PC-3 (cell line): ENCODE measurements at regions of chr18 and their contacts with region 1.

Region 1: DNA sequence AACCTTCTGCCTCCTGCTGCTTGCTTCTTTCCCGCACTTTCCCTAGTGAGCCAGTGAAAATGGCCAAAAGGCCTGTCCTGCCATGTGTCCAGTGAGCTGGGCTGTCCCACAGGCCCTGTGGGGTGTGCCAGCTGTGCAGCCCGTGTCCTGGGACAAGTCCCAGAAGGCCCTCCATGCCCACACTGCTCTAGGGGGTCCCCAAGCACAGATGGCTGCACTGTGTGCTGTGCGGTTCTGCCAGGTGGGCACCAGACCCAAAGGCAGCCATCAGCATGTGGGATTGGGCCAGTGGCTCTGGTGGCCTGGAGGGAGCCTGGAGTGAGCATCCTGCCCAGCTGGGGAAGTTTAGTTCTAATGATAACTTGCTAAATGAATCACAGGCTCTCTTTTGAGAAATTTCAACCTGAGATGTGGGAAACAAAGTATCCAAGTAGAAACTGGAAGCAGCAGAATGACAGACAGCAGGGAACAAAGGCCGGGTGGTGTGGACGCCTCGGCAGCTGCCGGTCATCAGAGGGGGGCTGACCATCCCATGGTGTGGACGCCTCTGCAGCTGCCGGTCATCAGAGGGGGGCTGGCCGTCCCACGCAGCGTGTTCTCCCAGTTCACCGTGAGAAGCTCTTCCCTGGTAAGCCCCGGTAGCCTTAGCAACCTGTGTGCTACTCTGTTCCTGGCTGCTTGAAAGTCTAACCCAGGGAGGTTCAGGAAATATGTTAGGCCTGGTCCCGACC is 9.9 kb upstream of the CNDP2 start:
- DNase-seq: no peak
- ATAC-seq: no peak
- H3K4me3 ChIP-seq: no peak overlapping the region
- H3K27ac ChIP-seq: no peak overlapping the region
- H3K4me1 ChIP-seq: no peaks in the 10 kb centered on the region
- H3K27me3 ChIP-seq: peaks cover 15% of the 10 kb centered on the region
- CTCF ChIP-seq: no peak

Region 2: DNA sequence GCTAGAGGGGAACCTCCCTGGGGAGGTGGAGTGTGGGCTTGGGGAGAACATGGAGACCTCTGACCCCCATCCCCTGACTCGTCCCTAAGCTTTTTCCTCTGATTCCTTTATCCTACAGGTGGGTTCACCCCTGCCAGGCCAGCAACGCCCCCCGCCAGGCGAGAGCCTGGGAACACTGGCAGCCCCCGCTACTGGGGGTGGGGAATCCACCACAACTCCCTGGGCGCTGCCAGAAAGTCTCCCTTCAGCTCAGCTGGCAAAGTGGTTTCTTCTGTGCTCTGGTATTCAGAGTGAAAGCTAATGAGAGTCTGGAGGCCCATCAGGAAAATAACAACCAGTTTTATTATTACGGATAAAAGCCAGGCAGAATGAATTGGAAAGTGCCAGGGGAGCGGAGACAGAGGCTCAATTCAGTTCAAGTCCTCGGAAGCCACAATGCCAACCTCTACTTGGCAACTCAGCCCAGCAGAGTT is 32.0 kb before region 1 on chr18:
- CTCF ChIA-PET with region 1: no interaction called
- POLR2A ChIA-PET with region 1: no interaction called
- intact Hi-C with region 1: loop called (anchors 2 kb)
- DNase-seq: no peak
- ATAC-seq: no peak
- H3K4me3 ChIP-seq: no peak overlapping the region
- H3K27ac ChIP-seq: no peak overlapping the region
- H3K4me1 ChIP-seq: no peaks in the 10 kb centered on the region
- H3K27me3 ChIP-seq: peaks cover 93% of the 10 kb centered on the region
- CTCF ChIP-seq: no peak

Region 3: GRCh38 chr18:74682141-74682990 is 196.1 kb after region 1 on chr18:
- CTCF ChIA-PET with region 1: no interaction called
- POLR2A ChIA-PET with region 1: no interaction called
- intact Hi-C with region 1: no loop called
- DNase-seq: no peak
- ATAC-seq: no peak
- H3K4me3 ChIP-seq: no peak overlapping the region
- H3K27ac ChIP-seq: no peak overlapping the region
- H3K4me1 ChIP-seq: no peaks in the 10 kb centered on the region
- H3K27me3 ChIP-seq: no peaks in the 10 kb centered on the region
- CTCF ChIP-seq: no peak